CD4-positive, alpha-beta memory T cell (primary cell): ENCODE measurements at regions of chr6 and their contacts with region 1.

Region 1: GRCh38 chr6:38639498-38640215 is at the start of gene BTBD9:
- DNase-seq: peak; percentile 87 to 92 (median 90)
- H3K4me3 ChIP-seq: peak within 1 kb of the TSS; percentile 90 to 100
- H3K4me3 Mint-ChIP-seq: peak within 1 kb of the TSS; percentile 86 to 95 (median 93)
- H3K27ac ChIP-seq: peak within 1 kb of the TSS; percentile 97
- H3K27ac Mint-ChIP-seq: peak within 1 kb of the TSS; percentile 97 to 99 (median 98)
- H3K4me1 ChIP-seq: peaks cover 44% of the 10 kb centered on the region
- H3K4me1 Mint-ChIP-seq: peaks cover 31 to 64% (median 49%) of the 10 kb centered on the region in 4 donors
- H3K27me3 ChIP-seq: no peaks in the 10 kb centered on the region
- H3K27me3 Mint-ChIP-seq: no peaks in the 10 kb centered on the region
- total RNA-seq, gene BTBD9: 39.7 to 40.4 TPM

Region 2: DNA sequence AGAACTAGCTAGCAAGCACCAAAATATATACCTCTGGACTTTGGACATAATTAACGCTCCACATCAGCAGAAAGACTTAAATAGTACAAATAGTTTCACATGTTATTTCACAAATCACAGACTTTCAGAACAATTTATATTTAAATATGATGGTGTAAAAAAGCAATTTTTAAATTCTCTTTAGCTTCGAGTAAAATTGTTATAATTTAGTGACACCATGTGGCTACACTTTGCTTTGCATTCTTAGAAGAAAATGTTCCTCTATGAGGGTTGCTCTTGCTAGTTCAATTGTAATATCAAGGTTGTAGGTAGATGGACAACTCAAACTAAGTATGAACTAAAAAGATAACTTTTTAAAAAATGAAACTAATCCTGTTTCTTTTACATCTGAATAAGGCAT is 68.9 kb before region 1 on chr6:
- CTCF ChIA-PET with region 1: no interaction called
- POLR2A ChIA-PET with region 1: interaction called, 15 read pairs
- intact Hi-C with region 1: loop called (anchors 1 kb)
- DNase-seq: no peak
- H3K4me3 ChIP-seq: no peak overlapping the region
- H3K4me3 Mint-ChIP-seq: no peak overlapping the region
- H3K27ac ChIP-seq: no peak overlapping the region
- H3K27ac Mint-ChIP-seq: peak overlapping the region in 4 of 7 donors; percentile 63 to 95 (median 84)
- H3K4me1 ChIP-seq: peaks cover 17% of the 10 kb centered on the region
- H3K4me1 Mint-ChIP-seq: peaks cover 13 to 22% (median 17%) of the 10 kb centered on the region in 4 donors
- H3K27me3 ChIP-seq: no peaks in the 10 kb centered on the region
- H3K27me3 Mint-ChIP-seq: no peaks in the 10 kb centered on the region

Region 3: GRCh38 chr6:38702558-38703397 is 63.1 kb after region 1 on chr6 and contains the start of gene GLO1:
- CTCF ChIA-PET with region 1: no interaction called
- POLR2A ChIA-PET with region 1: interaction called, 16 read pairs
- intact Hi-C with region 1: loop called (anchors 1 kb)
- DNase-seq: peak; percentile 94 to 98 (median 95)
- H3K4me3 ChIP-seq: peak within 1 kb of the TSS; percentile 56 to 91
- H3K4me3 Mint-ChIP-seq: peak within 1 kb of the TSS; percentile 83 to 96 (median 88)
- H3K27ac ChIP-seq: peak within 1 kb of the TSS; percentile 85
- H3K27ac Mint-ChIP-seq: peak within 1 kb of the TSS; percentile 83 to 98 (median 92)
- H3K4me1 ChIP-seq: peaks cover 11% of the 10 kb centered on the region
- H3K4me1 Mint-ChIP-seq: peaks cover 21 to 38% (median 27%) of the 10 kb centered on the region in 4 donors
- H3K27me3 ChIP-seq: no peaks in the 10 kb centered on the region
- H3K27me3 Mint-ChIP-seq: peaks cover 3 to 7% of the 10 kb centered on the region in 2 donors
- total RNA-seq, gene GLO1: 28.3 to 28.7 TPM

Region 4: GRCh38 chr6:38713812-38714211 is 74.2 kb after region 1 on chr6:
- CTCF ChIA-PET with region 1: no interaction called
- POLR2A ChIA-PET with region 1: interaction called, 10 read pairs
- intact Hi-C with region 1: no loop called
- DNase-seq: peak; percentile 39 to 66 (median 45)
- H3K4me3 ChIP-seq: no peak overlapping the region
- H3K4me3 Mint-ChIP-seq: peak overlapping the region in 6 of 8 donors; percentile 21 to 72 (median 55)
- H3K27ac ChIP-seq: no peak overlapping the region
- H3K27ac Mint-ChIP-seq: peak overlapping the region; percentile 10 to 90 (median 79)
- H3K4me1 ChIP-seq: peaks cover 24% of the 10 kb centered on the region
- H3K4me1 Mint-ChIP-seq: peaks cover 14 to 23% (median 17%) of the 10 kb centered on the region in 4 donors
- H3K27me3 ChIP-seq: no peaks in the 10 kb centered on the region
- H3K27me3 Mint-ChIP-seq: peaks cover 16 to 18% of the 10 kb centered on the region in 2 donors

Region 5: DNA sequence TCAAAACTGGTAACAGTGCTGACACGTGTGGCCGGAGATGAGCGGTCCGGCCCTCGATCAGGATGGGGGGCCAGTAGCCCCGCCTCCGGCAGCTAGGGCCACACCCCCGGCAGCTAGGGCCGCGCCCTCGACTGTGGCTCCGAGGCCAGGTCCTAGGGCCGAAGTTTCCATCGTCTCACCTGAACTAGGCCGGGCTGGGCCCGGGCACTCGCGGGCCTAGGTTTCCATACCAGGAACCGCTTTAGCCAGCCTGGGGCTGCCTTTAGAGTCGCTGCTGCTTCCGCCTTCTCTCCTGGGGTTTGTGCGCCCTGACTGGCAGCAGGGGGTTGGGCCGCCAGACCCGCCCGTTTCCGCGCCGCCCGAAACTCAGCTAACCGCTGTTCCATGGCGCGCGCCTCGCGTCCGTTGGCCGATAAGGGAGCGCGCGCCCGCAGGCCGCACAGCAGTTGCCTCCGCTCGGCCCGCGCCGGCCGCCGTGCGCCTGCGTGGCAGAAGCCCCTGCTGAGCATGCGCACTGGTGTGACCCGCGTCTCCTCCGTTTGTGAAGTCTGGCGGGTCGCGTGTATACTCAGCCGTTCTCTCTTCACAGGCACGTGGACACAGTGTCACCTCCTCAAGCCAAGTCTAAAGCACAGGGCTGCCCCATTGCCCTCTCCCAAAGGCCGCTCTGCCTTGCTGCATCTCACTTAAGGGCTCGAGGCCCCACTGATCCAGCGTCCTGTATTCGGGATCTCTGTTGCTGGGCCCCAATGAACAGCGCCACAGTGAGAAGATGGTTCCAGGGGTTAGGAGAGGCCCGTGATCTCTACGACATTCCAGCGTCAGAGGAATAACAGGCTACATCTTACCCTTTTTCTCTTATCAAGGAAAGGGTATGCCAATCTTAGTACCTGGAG is 475.3 kb after region 1 on chr6 and contains the start of gene SAYSD1:
- CTCF ChIA-PET with region 1: no interaction called
- POLR2A ChIA-PET with region 1: interaction called, 3 read pairs
- intact Hi-C with region 1: loop called (anchors 10 kb)
- DNase-seq: peak; percentile 89 to 94 (median 93)
- H3K4me3 ChIP-seq: peak within 1 kb of the TSS; percentile 79 to 97
- H3K4me3 Mint-ChIP-seq: peak within 1 kb of the TSS; percentile 97 to 99 (median 98)
- H3K27ac ChIP-seq: peak within 1 kb of the TSS; percentile 79
- H3K27ac Mint-ChIP-seq: peak within 1 kb of the TSS; percentile 92 to 99 (median 98)
- H3K4me1 ChIP-seq: peaks cover 44% of the 10 kb centered on the region
- H3K4me1 Mint-ChIP-seq: peaks cover 40 to 58% (median 48%) of the 10 kb centered on the region in 4 donors
- H3K27me3 ChIP-seq: no peaks in the 10 kb centered on the region
- H3K27me3 Mint-ChIP-seq: no peaks in the 10 kb centered on the region
- total RNA-seq, gene SAYSD1: 21.6 to 22.4 TPM